PC-9 (cell line): ENCODE measurements at regions of chr4 and their contacts with region 1.

Region 1: DNA sequence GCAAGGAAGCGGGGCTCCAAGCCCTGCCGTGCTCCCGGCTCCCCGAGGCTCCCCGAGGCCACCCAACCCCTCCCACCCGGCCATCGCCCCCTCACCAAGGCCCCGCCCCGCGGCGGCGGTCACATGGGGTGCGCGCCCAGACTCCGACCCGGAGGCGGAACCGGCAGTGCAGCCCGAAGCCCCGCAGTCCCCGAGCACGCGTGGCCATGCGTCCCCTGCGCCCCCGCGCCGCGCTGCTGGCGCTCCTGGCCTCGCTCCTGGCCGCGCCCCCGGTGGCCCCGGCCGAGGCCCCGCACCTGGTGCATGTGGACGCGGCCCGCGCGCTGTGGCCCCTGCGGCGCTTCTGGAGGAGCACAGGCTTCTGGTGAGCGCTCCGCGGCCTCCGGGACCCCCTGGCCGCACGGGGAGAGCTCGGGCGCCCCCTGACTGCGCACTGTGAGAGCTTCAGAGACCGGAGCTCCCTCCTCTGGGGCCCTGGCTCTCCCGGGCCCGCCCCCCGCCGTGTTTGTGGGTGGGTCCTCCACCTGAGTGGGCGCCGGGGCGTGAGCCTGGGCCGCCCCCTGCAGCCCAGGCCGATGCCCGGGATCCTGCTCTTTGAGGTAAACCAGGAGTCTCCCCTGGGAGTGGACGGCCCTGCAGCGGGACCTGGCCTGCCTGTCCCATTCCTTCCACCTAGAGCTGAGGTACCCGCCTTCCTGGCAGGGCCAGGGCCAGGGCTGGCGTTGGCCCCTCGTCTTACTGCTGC is at the start of gene IDUA:
- DNase-seq: peak; percentile 83 to 89
- H3K4me3 ChIP-seq: peak within 1 kb of the TSS; percentile 79
- H3K27ac ChIP-seq: peak within 1 kb of the TSS; percentile 35
- H3K4me1 ChIP-seq: peaks cover 28% of the 10 kb centered on the region
- H3K27me3 ChIP-seq: no peaks in the 10 kb centered on the region
- CTCF ChIP-seq: peak; percentile 65
- total RNA-seq, gene IDUA: 46.6 and 74.7 TPM in 2 replicates

Region 2: DNA sequence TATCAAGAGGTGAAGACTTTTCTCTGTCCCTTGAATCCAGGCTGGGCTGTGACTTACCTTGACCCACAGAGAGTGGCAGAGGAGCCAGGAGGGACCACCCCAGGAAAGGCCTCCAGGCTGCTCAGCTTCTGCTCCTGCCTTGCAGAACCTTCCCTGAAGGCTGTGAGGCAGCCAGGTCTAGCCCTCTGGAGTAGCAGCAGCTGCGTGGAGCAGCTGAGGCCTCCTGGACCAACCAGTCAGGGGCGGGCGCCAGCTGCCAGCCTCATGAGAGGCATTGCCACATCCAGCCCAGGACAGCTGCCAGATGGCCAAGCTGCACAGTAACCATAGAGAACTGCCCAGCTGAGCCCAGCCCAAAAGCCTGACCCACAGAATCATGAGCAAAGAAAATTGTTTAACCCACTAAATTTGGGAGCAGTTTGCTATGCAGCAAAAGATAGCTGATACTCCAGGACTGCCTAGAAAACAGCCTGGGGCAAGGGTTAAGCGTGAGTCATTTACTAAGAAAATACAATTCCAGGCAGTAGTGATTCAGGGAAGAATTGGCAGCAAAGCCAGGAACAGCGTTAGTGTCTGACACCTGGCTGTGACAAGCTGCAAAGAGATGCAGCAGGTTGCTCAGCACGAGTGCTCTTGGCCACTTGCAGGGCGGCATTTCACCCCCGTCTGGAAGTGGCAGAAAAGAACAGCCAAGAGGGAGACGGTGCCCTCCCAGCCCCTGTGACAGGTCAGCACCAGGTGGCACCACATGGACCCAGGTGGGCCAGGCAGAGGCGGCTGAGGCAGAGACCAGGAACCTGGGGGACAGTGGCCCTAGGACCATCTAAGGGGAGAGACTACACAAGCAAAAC is 376.4 kb before region 1 on chr4:
- CTCF ChIA-PET with region 1: no interaction called
- POLR2A ChIA-PET with region 1: interaction called, 3 read pairs
- intact Hi-C with region 1: loop called (anchors 10 kb)
- DNase-seq: peak; percentile 84 to 96
- H3K4me3 ChIP-seq: no peak overlapping the region
- H3K27ac ChIP-seq: no peak overlapping the region
- H3K4me1 ChIP-seq: peaks cover 25% of the 10 kb centered on the region
- H3K27me3 ChIP-seq: peaks cover 50% of the 10 kb centered on the region
- CTCF ChIP-seq: no peak

Region 3: GRCh38 chr4:931960-932712 is 54.9 kb before region 1 on chr4 and contains the starts of genes GAK and TMEM175:
- CTCF ChIA-PET with region 1: interaction called, 4 read pairs
- POLR2A ChIA-PET with region 1: interaction called, 12 read pairs
- intact Hi-C with region 1: loop called (anchors 2 kb)
- DNase-seq: peak; percentile 86 to 97
- H3K4me3 ChIP-seq: peak within 1 kb of the TSS; percentile 96
- H3K27ac ChIP-seq: peak within 1 kb of the TSS; percentile 24
- H3K4me1 ChIP-seq: peaks cover 30% of the 10 kb centered on the region
- H3K27me3 ChIP-seq: no peaks in the 10 kb centered on the region
- CTCF ChIP-seq: no peak
- total RNA-seq, gene GAK: 114 and 138 TPM in 2 replicates
- total RNA-seq, gene TMEM175: 13.5 and 20.2 TPM in 2 replicates

Region 4: DNA sequence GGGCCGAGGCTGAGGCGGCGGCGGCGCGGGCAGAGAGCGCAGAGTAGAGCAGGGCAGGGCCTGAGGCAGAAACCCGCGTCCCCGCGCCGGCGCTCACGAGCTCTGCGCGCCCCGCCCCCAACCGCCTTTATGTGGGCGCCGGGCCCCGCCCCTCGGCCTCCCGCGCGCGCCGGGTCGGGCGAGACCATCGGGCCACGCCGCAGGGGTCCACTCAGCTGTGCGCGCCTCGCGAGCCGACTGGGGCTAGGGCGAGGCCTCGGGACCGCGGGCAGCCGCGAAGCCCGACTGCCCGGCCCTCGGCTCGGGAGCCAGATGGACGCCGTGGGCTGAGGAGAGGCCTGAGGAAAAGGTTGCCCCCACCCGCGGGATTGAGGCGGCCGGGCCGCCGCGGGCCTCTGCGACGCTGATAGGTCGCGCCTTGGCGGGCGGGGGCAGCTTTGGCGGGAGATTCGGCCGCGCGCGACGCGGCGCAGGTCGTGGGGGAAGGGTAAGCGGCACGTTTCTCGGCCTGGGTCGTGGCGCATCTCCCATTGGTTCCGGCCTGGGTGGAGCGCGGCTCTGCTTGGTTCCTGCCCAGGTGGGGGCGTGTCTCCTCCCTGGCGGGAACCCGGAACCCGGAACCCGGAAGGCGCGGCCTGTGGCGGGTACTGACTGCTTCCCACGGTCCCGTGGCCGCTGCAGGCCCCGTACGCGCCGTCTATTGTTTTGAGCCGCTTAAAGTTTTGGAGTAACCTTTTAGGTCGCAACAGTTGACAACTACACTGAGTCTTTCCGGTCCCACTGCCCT is 725.4 kb after region 1 on chr4 and contains the start of gene SLBP:
- CTCF ChIA-PET with region 1: no interaction called
- POLR2A ChIA-PET with region 1: interaction called, 21 read pairs
- intact Hi-C with region 1: no loop called
- DNase-seq: peak; percentile 90 to 98
- H3K4me3 ChIP-seq: peak within 1 kb of the TSS; percentile 71
- H3K27ac ChIP-seq: peak within 1 kb of the TSS; percentile 96
- H3K4me1 ChIP-seq: peaks cover 20% of the 10 kb centered on the region
- H3K27me3 ChIP-seq: no peaks in the 10 kb centered on the region
- CTCF ChIP-seq: no peak
- total RNA-seq, gene SLBP: 61.7 and 63.4 TPM in 2 replicates